MCF 10A (cell line): ENCODE measurements at regions of chr19 and their contacts with region 1.

Region 1: GRCh38 chr19:46021531-46022041 is 1.3 kb downstream of the PGLYRP1 start:
- DNase-seq: peak; percentile 74
- H3K4me3 Mint-ChIP-seq: no peak overlapping the region
- H3K27ac Mint-ChIP-seq: no peak overlapping the region
- H3K4me1 Mint-ChIP-seq: peaks cover 16% of the 10 kb centered on the region
- H3K27me3 Mint-ChIP-seq: no peaks in the 10 kb centered on the region
- CTCF ChIP-seq: no peak

Region 2: GRCh38 chr19:45939792-45940514 is 81.6 kb before region 1 on chr19:
- CTCF ChIA-PET with region 1: no interaction called
- POLR2A ChIA-PET with region 1: no interaction called
- intact Hi-C with region 1: no loop called
- DNase-seq: no peak
- H3K4me3 Mint-ChIP-seq: no peak overlapping the region
- H3K27ac Mint-ChIP-seq: no peak overlapping the region
- H3K4me1 Mint-ChIP-seq: peaks cover 2% of the 10 kb centered on the region
- H3K27me3 Mint-ChIP-seq: peaks cover 23% of the 10 kb centered on the region
- CTCF ChIP-seq: no peak

Region 3: GRCh38 chr19:46009530-46010510 is 11.8 kb before region 1 on chr19:
- CTCF ChIA-PET with region 1: interaction called, 12 read pairs
- POLR2A ChIA-PET with region 1: interaction called, 3 read pairs
- intact Hi-C with region 1: no loop called
- DNase-seq: peak; percentile 74
- H3K4me3 Mint-ChIP-seq: no peak overlapping the region
- H3K27ac Mint-ChIP-seq: no peak overlapping the region
- H3K4me1 Mint-ChIP-seq: peaks cover 8% of the 10 kb centered on the region
- H3K27me3 Mint-ChIP-seq: no peaks in the 10 kb centered on the region
- CTCF ChIP-seq: peak; percentile 73